ENCODE measurements at regions of chr1 and their contacts with region 1.

Region 1: GRCh38 chr1:167059045-167059808 is 30.9 kb downstream of the GPA33 start:
- DNase-seq: peak; percentile 69 to 80
- ATAC-seq: peak; percentile 65 to 86 (median 76)
- H3K4me3 ChIP-seq: peak overlapping the region; percentile 29
- H3K27ac ChIP-seq: peak overlapping the region; percentile 21
- H3K4me1 ChIP-seq: peaks cover 6% of the 10 kb centered on the region
- H3K27me3 ChIP-seq: no peaks in the 10 kb centered on the region
- CTCF ChIP-seq: peak; percentile 98

Region 2: DNA sequence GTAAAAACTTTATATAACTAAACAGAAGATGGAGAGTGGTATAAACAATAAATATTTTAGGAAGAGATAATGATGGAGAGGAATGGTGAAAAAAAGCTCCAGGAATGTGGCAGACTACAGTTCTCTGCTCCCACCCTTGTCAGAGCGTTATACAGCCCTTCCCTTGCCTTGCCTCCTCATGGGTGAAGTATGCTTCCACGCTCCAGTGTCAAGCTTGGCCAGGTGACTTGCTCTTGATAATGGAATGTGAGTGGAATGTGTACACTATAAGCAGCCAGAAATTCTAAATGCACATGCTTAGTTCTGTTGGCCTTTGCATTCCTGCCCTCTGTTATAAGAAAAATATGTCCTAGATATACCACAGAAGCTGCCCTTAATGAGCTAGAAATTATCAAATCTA is 244.6 kb before region 1 on chr1:
- intact Hi-C with region 1: no loop called
- DNase-seq: no peak
- ATAC-seq: no peak
- H3K4me3 ChIP-seq: no peak overlapping the region
- H3K27ac ChIP-seq: no peak overlapping the region
- H3K4me1 ChIP-seq: no peaks in the 10 kb centered on the region
- H3K27me3 ChIP-seq: no peaks in the 10 kb centered on the region
- CTCF ChIP-seq: no peak

Region 3: DNA sequence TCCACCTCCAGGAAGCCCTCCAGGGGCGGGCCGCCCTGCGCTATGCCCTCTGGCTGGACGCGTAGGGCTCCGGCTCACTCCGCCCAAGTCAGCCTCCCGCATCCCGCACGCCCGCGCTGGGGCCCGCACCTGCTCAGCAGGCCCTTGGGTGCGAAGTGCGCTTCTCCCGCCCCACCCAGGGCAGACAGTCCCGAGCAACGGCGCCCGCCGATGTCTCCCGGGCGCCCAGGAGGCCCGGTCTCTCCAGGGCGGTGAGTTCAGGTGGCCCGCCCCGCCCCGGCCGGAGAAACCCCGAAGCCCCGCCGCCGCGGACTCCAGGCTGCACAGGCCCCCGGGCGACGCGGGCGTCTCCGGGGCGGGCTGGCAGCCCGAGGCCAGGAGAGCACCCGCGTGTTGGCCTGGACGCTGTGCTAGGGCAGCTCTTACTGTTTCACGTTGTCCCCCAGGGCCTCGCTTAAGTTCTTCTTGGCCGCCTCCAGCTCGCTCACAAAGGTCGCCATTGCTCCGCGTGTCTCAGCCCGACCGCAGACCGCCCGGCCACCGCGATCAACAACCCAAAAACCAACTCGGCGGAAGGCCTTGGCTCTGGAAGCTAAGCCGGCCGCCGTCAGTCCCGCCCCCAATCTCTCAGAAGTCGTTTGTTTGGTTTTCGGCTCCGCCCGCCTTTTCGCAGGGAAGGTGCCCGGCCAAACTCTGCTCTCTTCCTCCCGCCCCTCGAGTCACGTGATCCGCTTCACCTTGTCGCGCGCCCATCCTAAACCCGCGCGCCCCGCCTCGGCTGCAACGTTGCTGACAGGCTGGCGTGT is 183.3 kb before region 1 on chr1 and contains the start of gene TADA1:
- intact Hi-C with region 1: loop called in 1 of 2 experiments (anchors 5 kb)
- DNase-seq: peak; percentile 99
- ATAC-seq: peak; percentile 95 to 96 (median 96)
- H3K4me3 ChIP-seq: peak within 1 kb of the TSS; percentile 84
- H3K27ac ChIP-seq: peak within 1 kb of the TSS; percentile 90
- H3K4me1 ChIP-seq: peaks cover 16% of the 10 kb centered on the region
- H3K27me3 ChIP-seq: no peaks in the 10 kb centered on the region
- CTCF ChIP-seq: peak; percentile 28
- total RNA-seq, gene TADA1: 8.3 to 9.9 (median 8.9) TPM

Region 4: GRCh38 chr1:166888373-166889111 is 170.7 kb before region 1 on chr1:
- intact Hi-C with region 1: loop called in 1 of 2 experiments (anchors 5 kb)
- DNase-seq: no peak
- ATAC-seq: no peak
- H3K4me3 ChIP-seq: no peak overlapping the region
- H3K27ac ChIP-seq: no peak overlapping the region
- H3K4me1 ChIP-seq: no peaks in the 10 kb centered on the region
- H3K27me3 ChIP-seq: peaks cover 0 to 16% (median 6%) of the 10 kb centered on the region in 3 donors
- CTCF ChIP-seq: no peak

Region 5: DNA sequence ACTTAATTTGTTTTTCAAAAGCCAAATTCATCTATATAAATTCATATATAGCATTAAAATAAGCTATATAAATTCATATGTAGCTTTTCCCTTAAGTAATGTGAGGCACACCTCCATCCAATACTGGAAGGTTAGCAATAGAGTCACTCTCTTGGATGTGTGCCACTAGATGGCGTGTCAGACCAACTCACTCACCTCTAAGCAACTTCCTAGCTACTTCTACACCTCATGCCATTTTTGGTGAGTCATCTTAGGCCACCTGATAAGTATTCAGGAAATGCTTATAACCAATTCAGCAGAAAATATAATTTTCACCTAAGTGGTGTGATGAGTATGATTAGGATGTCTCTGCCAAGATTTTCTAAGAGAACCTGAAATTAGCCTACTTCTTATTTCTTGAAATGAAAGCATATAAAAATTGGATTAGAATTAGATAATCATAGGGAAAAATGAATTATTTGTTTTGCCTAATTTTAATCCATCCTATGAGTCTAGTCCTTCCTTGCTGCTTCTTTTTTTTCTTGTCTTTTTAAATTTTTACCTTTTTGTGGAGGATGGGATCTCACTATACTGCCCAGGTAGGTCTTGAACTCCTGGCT is 148.7 kb before region 1 on chr1:
- intact Hi-C with region 1: loop called (anchors 1 to 2 kb)
- DNase-seq: peak in 1 of 2 donors; percentile 31
- ATAC-seq: peak; percentile 89 to 94 (median 91)
- H3K4me3 ChIP-seq: no peak overlapping the region
- H3K27ac ChIP-seq: no peak overlapping the region
- H3K4me1 ChIP-seq: no peaks in the 10 kb centered on the region
- H3K27me3 ChIP-seq: no peaks in the 10 kb centered on the region
- CTCF ChIP-seq: peak; percentile 59

Region 6: DNA sequence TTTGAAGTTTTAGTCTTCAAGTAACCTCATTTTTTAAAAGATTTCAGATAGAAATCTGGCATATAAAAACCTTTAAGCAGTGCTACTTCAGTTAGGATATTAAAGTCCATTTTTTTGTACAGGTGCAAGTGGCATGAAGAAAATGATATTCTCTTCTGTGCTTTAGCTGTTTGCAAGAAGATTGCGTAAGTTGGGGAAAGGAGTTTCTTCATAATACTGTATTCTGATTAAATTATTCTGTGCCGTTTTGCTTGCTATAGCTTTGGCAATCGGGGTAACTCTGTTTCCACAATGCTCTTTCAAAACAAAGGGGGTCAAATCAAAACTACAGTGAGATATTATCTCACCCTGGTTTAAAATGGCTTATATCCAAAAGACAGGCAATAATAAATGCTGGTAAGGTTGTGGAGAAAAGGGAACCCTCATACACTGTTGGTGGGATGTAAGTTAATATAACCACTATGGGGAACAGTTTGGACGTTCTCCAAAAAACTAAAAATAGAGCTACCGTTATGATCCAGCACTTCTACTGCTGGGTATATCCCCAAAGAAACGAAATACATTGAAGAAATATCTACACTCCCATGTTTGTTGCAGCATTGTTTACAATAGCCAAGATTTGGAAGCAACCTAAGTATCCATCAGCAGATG is 43.0 kb before region 1 on chr1:
- intact Hi-C with region 1: no loop called
- DNase-seq: no peak
- ATAC-seq: no peak
- H3K4me3 ChIP-seq: no peak overlapping the region
- H3K27ac ChIP-seq: no peak overlapping the region
- H3K4me1 ChIP-seq: no peaks in the 10 kb centered on the region
- H3K27me3 ChIP-seq: no peaks in the 10 kb centered on the region
- CTCF ChIP-seq: no peak